Activated B cell treated with CpG ODN at 0.5 μM for 24 hours (primary cell): ENCODE measurements at regions of chr3 and their contacts with region 1.

Region 1: GRCh38 chr3:186617038-186617946 is 4.4 kb downstream of the AHSG start:
- DNase-seq: peak; percentile 65
- ATAC-seq: peak; percentile 97
- H3K4me3 Mint-ChIP-seq: peak overlapping the region; percentile 58
- H3K27ac Mint-ChIP-seq: no peak overlapping the region
- H3K4me1 Mint-ChIP-seq: peaks cover 16% of the 10 kb centered on the region
- H3K27me3 Mint-ChIP-seq: peaks cover 43% of the 10 kb centered on the region
- CTCF ChIP-seq: peak; percentile 47

Region 2: DNA sequence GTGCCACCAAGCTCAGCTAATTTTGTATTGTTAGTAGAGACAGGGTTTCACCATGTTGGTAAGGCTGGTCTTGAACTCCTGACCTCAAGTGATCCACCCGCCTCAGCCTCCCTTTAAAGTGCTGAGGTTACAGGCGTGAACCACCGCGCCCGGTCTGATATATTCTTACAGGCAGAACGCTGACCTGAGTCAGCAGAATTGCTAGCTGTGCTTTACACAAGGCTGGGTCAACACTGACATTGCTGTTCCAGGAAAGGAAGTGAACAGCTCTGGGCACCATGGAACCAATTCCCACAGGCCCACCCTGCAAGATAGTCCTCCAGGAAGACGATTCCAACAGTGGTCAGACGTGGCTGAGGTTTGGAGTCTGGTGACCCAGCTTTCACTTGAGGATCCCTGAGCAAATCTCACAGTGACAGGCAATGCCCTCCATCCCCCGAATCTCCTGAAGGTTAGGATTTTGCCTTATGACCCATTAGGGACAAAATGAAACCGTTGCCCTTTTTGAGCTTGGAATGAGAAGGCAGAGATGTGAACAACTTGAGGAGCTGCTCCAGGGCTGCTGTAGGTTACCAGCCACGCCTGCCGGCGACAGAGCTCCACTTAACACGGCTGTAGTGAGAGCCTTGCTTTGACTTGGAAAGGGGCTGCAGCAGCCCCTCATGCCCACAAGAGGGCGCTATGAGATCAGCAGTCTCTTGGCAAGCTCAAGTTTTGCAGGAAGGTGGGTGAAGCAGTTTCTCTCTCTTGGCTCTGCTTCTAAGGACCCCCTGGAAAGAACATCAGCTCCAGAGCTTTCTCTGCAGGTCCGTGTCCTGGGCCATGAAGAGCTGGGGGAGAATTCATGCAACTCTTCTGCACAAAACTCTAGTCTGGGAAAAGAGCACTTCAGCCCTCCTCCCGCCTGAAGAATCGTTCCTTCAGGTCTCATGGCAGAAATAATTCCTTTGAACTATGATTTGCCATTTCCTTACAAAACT is 957.1 kb before region 1 on chr3:
- CTCF ChIA-PET with region 1: interaction called, 9 read pairs
- POLR2A ChIA-PET with region 1: no interaction called
- intact Hi-C with region 1: loop called (anchors 10 kb)
- DNase-seq: peak; percentile 37
- ATAC-seq: peak; percentile 77
- H3K4me3 Mint-ChIP-seq: no peak overlapping the region
- H3K27ac Mint-ChIP-seq: no peak overlapping the region
- H3K4me1 Mint-ChIP-seq: no peaks in the 10 kb centered on the region
- H3K27me3 Mint-ChIP-seq: peaks cover 17% of the 10 kb centered on the region
- CTCF ChIP-seq: no peak

Region 3: DNA sequence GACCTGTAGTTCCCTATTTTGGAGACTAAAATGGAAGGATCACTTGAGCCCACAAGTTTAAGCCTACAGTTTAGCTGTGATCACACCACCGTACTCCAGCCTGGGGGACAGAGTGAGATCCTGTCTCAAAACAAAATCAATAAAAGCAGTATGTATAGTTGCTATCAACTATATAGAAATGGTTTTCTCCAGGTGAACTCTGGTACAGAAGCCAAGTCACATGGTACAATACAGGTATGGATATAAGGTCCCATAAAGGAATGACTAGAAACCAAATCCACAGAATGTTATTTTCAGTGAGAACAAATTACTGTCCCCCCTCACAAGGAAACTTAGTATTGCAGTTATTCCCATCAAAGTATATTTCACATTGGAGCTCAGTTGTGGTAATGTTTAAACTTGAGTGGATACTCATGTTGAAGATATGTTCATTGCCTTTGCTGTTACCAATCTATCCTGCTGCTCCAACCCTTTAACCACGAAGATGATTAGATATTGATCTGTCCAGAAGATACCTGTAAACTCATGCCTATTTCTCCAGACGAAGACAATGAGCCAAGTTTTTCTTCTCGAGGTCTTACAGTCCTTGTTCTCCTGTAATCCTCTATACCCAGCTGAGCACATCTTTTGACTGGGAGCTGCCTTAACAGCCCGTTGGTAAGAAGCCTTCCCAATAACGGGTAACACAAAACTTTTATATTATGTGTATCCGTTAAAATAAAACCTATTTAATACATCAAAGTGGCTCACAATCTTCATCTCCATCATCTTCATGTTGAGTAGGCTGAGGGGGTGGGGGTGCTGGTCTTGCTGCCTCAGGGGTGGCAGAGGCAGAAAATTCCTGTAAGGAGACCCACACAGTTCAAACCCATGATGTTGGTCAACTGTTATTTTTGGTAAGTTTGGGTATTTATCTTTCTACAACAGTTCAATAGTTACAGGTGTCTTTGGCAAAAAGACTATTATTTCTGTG is 704.1 kb before region 1 on chr3:
- CTCF ChIA-PET with region 1: no interaction called
- POLR2A ChIA-PET with region 1: no interaction called
- intact Hi-C with region 1: no loop called
- DNase-seq: no peak
- ATAC-seq: peak; percentile 14
- H3K4me3 Mint-ChIP-seq: no peak overlapping the region
- H3K27ac Mint-ChIP-seq: no peak overlapping the region
- H3K4me1 Mint-ChIP-seq: no peaks in the 10 kb centered on the region
- H3K27me3 Mint-ChIP-seq: no peaks in the 10 kb centered on the region
- CTCF ChIP-seq: no peak

Region 4: DNA sequence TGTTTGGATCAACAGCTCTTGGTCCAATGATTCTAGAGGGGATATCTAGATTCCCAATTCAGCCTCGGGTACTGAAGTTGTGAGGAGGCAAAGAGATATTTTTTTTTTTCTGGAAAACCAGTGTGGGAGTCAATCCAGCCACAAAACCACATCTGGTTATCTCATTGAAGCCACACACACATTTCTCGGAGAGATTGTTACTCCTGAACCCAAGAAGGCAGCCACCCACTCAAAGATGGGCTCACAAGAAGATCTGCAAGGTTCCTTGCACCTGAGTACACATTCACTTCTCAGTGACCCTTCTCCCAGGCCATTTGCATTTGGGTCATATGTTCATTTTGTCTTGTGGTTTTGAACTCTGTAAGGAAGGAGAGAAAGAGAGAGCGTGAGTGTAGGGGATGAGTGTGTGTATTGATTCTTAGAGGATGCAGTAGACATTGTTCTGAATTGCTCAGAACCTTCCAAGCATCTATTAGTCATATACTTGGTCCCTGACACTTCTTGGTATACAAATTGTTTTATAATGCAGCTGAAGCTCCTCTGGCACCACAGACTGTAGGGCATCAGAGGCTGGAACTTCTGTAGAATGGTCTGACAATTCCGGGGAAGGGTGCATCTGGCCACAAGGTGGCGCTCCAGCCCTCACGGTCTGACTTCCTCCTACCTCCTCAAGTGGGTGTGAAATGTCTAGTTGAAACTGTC is 640.2 kb before region 1 on chr3:
- CTCF ChIA-PET with region 1: interaction called, 98 read pairs
- POLR2A ChIA-PET with region 1: interaction called, 3 read pairs
- intact Hi-C with region 1: loop called (anchors 1 kb)
- DNase-seq: peak; percentile 76
- ATAC-seq: peak; percentile 96
- H3K4me3 Mint-ChIP-seq: no peak overlapping the region
- H3K27ac Mint-ChIP-seq: no peak overlapping the region
- H3K4me1 Mint-ChIP-seq: peaks cover 6% of the 10 kb centered on the region
- H3K27me3 Mint-ChIP-seq: peaks cover 4% of the 10 kb centered on the region
- CTCF ChIP-seq: peak; percentile 64

Region 5: GRCh38 chr3:186241910-186242821 is 375.1 kb before region 1 on chr3:
- CTCF ChIA-PET with region 1: interaction called, 5 read pairs
- POLR2A ChIA-PET with region 1: no interaction called
- intact Hi-C with region 1: loop called (anchors 1 kb)
- DNase-seq: no peak
- ATAC-seq: peak; percentile 91
- H3K4me3 Mint-ChIP-seq: no peak overlapping the region
- H3K27ac Mint-ChIP-seq: no peak overlapping the region
- H3K4me1 Mint-ChIP-seq: peaks cover 15% of the 10 kb centered on the region
- H3K27me3 Mint-ChIP-seq: no peaks in the 10 kb centered on the region
- CTCF ChIP-seq: no peak

Region 6: DNA sequence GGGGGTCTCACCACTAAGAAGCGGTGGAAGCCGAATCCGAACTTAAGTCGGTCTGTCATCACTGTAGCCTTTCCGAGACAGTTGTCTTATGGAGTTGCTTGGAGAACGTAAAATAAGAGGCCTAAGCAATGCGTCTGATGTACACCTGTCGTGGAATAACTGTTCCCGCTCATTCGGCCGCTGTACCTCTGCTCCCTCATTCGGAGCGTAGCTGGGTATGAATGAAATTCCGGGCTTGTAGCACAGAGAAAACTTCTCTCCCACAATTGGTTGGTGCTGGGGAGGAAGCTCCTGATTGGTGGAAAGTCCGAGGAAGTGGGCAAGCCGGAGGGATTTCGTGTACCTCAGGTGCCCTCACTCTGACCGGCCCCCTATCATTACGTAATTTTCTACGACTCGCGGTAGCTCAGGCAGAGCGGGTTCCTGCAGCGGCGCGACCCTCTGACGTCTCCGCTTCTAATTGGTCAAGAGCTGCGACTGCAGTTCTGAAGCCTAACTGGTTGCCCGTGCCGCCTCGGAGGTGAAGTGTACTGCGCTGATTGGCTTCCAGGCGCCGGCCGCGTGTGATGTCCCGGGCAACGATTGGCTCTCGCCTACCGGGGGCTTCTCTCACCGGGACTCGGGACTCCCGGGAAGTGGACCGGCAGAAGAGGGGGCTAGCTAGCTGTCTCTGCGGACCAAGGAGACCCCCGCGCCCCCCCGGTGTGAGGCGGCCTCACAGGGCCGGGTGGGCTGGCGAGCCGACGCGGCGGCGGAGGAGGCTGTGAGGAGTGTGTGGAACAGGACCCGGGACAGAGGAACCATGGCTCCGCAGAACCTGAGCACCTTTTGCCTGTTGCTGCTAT is 47.0 kb before region 1 on chr3 and contains the start of gene DNAJB11:
- CTCF ChIA-PET with region 1: interaction called, 10 read pairs
- POLR2A ChIA-PET with region 1: no interaction called
- intact Hi-C with region 1: no loop called
- DNase-seq: peak; percentile 91
- ATAC-seq: peak; percentile 82
- H3K4me3 Mint-ChIP-seq: peak within 1 kb of the TSS; percentile 94
- H3K27ac Mint-ChIP-seq: peak within 1 kb of the TSS; percentile 97
- H3K4me1 Mint-ChIP-seq: peaks cover 56% of the 10 kb centered on the region
- H3K27me3 Mint-ChIP-seq: no peaks in the 10 kb centered on the region
- CTCF ChIP-seq: no peak
- total RNA-seq, gene DNAJB11: 51.3 and 52.5 TPM in 2 replicates

Region 7: DNA sequence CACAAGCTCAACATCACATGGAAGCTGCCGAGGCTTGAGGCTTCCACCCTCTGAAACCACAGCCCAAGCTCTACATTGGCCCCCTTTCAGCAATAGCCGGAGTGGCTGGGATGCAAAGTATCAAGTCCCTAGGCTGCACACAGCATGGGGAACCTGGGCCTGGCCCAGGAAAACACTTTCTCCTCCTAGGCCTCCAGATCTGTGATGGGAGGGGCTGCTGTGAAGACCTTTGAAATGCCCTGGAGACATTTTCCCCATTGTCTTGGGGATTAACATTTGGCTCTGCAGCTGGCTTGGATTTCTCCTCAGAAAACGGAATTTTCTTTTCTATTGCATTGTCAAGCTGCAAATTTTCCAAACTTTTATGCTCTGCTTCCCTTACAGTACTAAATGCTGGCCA is 66.7 kb after region 1 on chr3:
- CTCF ChIA-PET with region 1: no interaction called
- POLR2A ChIA-PET with region 1: no interaction called
- intact Hi-C with region 1: no loop called
- DNase-seq: no peak
- ATAC-seq: no peak
- H3K4me3 Mint-ChIP-seq: no peak overlapping the region
- H3K27ac Mint-ChIP-seq: no peak overlapping the region
- H3K4me1 Mint-ChIP-seq: no peaks in the 10 kb centered on the region
- H3K27me3 Mint-ChIP-seq: peaks cover 44% of the 10 kb centered on the region
- CTCF ChIP-seq: no peak

Region 8: GRCh38 chr3:186826976-186827731 is 209.9 kb after region 1 on chr3:
- CTCF ChIA-PET with region 1: interaction called, 187 read pairs
- POLR2A ChIA-PET with region 1: no interaction called
- intact Hi-C with region 1: no loop called
- DNase-seq: peak; percentile 85
- ATAC-seq: peak; percentile 94
- H3K4me3 Mint-ChIP-seq: peak overlapping the region; percentile 71
- H3K27ac Mint-ChIP-seq: no peak overlapping the region
- H3K4me1 Mint-ChIP-seq: peaks cover 22% of the 10 kb centered on the region
- H3K27me3 Mint-ChIP-seq: peaks cover 47% of the 10 kb centered on the region
- CTCF ChIP-seq: no peak